ENCODE measurements at regions of chr12 and their contacts with region 1.

Region 1: GRCh38 chr12:46124848-46125619 is 134.7 kb upstream of the SCAF11 start:
- DNase-seq: no peak
- H3K4me3 ChIP-seq: peak overlapping the region; percentile 8 to 20
- H3K27ac ChIP-seq: no peak overlapping the region
- H3K4me1 ChIP-seq: no peaks in the 10 kb centered on the region
- H3K27me3 ChIP-seq: no peaks in the 10 kb centered on the region
- CTCF ChIP-seq: peak; percentile 24 to 66 (median 42)
- POLR2A ChIP-seq: no peak

Region 2: DNA sequence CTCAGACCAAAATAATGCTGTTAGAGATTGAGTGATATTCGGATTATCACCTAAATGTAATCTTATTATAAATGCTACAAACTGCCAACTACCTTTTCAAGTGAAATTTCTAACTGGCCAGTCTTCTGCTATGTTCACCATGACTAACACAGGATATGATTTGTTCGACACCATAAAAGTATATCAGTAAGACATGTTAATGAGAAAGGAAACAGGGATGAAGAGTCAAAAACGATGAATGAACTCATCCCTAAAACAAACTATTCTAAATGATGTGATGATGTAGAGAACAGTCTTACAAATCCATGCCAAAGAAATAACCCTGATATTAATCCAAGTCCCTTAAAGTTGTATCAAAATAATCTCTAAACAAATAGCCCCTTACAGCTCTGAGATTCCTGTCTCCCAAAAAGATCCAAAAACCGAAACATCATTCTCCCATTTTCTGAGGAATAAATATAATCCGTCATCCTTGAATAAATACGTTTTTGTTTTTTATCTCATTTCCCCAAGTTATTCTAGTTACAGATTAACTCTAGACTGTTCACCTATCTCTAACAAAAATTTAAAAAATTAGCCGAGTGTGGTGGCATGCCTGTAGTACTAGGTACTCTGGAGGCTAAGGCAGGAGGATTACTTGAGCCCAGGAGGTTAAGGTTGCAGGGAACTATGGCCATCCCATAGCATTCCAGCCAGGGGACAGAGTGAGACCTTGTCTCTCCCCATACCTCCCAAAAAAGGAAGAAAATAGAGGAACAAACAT is 143.8 kb before region 1 on chr12:
- intact Hi-C with region 1: no loop called
- DNase-seq: no peak
- H3K4me3 ChIP-seq: no peak overlapping the region
- H3K27ac ChIP-seq: no peak overlapping the region
- H3K4me1 ChIP-seq: peaks cover 65% of the 10 kb centered on the region
- H3K27me3 ChIP-seq: no peaks in the 10 kb centered on the region
- CTCF ChIP-seq: no peak
- POLR2A ChIP-seq: no peak

Region 3: DNA sequence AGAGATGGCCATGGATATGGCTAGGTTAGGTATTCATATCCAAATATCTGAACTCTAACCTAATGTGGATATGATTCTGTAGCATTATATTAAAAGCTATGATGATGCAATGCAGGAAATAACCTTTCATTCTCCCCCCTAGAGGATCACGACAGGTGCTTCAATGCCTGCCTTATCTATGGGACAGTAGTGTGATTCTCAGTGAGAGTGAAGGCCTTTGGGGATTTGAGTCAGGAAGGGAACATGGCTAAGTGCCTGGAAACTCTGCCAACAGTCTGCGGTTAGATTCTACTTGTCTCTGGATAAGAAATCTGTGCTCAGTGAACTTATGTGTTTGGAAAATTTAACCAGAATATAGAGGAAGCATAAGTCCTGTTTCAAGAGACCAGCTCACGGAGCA is 62.0 kb after region 1 on chr12:
- intact Hi-C with region 1: no loop called
- DNase-seq: no peak
- H3K4me3 ChIP-seq: no peak overlapping the region
- H3K27ac ChIP-seq: no peak overlapping the region
- H3K4me1 ChIP-seq: no peaks in the 10 kb centered on the region
- H3K27me3 ChIP-seq: no peaks in the 10 kb centered on the region
- CTCF ChIP-seq: no peak
- POLR2A ChIP-seq: no peak

Region 4: DNA sequence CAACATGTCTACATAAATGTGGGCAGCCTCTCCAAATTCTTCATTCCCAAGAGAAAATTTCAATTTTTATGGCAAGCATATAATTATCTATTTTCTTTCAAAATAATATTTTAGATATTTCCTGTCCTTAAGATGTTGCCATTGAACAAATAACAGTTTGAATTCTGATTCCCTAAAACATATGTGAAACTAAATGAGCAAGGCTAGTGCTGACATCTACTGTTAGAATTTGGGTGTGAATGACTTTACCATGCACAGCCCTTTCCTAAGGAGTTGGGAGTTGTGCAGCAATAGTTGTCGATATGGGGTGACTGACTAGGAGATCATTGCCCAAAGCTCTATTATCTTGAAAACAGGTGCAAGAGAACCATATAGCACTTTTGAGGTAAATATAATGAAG is 808.9 kb after region 1 on chr12:
- intact Hi-C with region 1: loop called (anchors 10 kb)
- DNase-seq: no peak
- H3K4me3 ChIP-seq: no peak overlapping the region
- H3K27ac ChIP-seq: no peak overlapping the region
- H3K4me1 ChIP-seq: no peaks in the 10 kb centered on the region
- H3K27me3 ChIP-seq: no peaks in the 10 kb centered on the region
- CTCF ChIP-seq: peak in 2 of 3 experiments; percentile 30 to 42
- POLR2A ChIP-seq: no peak

Measured in vagina (tissue), 2 donors.